PC-3 (cell line): ENCODE measurements at regions of chr18 and their contacts with region 1.

Region 1: GRCh38 chr18:2111456-2111855 is 459.8 kb downstream of the METTL4 start:
- DNase-seq: peak; percentile 60
- ATAC-seq: peak; percentile 56
- H3K4me3 ChIP-seq: no peak overlapping the region
- H3K27ac ChIP-seq: no peak overlapping the region; the same call in 1 of the 2 replicates
- H3K4me1 ChIP-seq: peaks cover 37% of the 10 kb centered on the region
- H3K27me3 ChIP-seq: no peaks in the 10 kb centered on the region
- CTCF ChIP-seq: no peak

Region 2: GRCh38 chr18:2049986-2050385 is 61.5 kb before region 1 on chr18:
- CTCF ChIA-PET with region 1: no interaction called
- POLR2A ChIA-PET with region 1: no interaction called
- intact Hi-C with region 1: no loop called
- DNase-seq: no peak
- ATAC-seq: no peak
- H3K4me3 ChIP-seq: no peak overlapping the region
- H3K27ac ChIP-seq: no peak overlapping the region
- H3K4me1 ChIP-seq: peaks cover 10% of the 10 kb centered on the region; the same call in 1 of the 2 replicates
- H3K27me3 ChIP-seq: peaks cover 8% of the 10 kb centered on the region
- CTCF ChIP-seq: no peak

Region 3: DNA sequence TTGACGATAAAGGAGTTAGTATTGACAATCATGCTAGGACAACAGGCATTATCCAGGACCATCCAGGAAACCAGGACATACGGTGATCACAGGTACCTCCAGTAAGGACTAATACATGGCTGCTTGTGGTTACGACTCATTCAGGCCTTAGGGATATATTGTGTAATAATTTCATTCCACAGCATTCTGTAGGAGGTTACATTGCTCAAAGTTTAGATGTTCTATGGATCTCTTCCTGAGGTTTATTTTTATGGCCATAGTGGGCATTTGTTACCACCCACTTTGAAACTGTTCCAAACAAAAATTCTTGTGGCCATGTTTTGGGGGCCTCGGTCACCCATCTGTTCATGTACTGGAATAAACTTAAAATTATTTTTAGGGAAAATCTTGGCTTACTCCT is 28.2 kb after region 1 on chr18:
- CTCF ChIA-PET with region 1: no interaction called
- POLR2A ChIA-PET with region 1: interaction called, 11 read pairs
- intact Hi-C with region 1: no loop called
- DNase-seq: peak; percentile 88
- ATAC-seq: peak; percentile 94
- H3K4me3 ChIP-seq: no peak overlapping the region
- H3K27ac ChIP-seq: peak overlapping the region; percentile 12; the same call in 1 of the 2 replicates
- H3K4me1 ChIP-seq: peaks cover 18% of the 10 kb centered on the region
- H3K27me3 ChIP-seq: no peaks in the 10 kb centered on the region
- CTCF ChIP-seq: no peak